ENCODE measurements at regions of chr13 and their contacts with region 1.

Region 1: DNA sequence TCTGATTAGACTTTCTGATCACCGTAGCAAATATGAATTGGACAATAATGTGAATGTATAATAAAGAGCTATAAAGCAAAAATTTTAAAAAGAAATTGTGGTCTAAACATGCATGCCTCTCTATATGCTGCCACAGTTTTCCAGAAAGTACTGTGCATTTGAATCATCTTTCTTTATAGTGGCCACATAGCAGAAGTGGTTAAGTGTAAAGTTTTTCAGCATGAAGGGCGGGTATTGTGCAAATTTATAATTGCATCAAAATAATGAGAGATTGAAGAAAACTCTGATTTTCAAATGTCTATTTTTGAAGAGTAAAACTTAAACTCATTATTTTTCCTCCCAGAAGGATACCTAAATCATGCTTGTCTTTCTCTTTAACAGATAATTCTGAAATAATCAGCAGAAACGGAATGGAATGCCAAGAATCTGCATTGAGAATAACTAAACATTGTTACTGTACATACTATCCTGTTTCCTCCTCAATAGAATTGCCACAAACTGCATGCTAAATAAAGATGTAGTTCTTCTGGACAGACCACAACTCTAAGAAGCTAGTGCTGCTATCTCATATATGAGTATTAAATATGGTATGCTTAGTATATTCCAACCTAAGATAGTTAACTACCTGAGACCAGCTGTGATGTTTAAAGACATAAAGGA is 42.9 kb upstream of the RAP2A start:
- DNase-seq: no peak
- ATAC-seq: no peak
- H3K4me3 ChIP-seq: no peak overlapping the region
- H3K27ac ChIP-seq: no peak overlapping the region
- H3K4me1 ChIP-seq: peaks cover 0 to 6% of the 10 kb centered on the region in 2 experiments; a peak in 1 of 4 replicates
- H3K27me3 ChIP-seq: no peaks in the 10 kb centered on the region
- CTCF ChIP-seq: no peak
- POLR2A ChIP-seq: no peak
- RAD21 ChIP-seq: no peak

Region 2: DNA sequence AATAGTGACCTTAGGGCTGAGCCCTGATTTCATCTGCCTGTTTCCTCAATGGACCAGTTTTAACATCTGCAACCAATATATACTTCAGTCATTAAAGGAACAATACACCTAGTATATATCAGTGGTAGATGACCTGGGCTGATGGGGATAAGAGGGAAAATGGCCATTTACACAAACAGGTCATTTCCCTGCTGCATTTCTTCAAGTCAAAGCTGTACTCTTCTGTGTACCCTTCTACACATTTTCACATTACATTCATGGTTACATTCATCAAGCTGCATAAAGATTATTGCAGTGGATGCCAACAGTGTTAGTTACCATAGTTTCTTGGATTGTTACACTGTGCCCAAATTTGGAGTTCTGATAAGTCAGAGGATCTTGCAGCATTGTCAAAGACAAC is 38.3 kb before region 1 on chr13:
- CTCF ChIA-PET with region 1: no interaction called
- POLR2A ChIA-PET with region 1: no interaction called
- RAD21 ChIA-PET with region 1: no interaction called
- intact Hi-C with region 1: loop called (anchors 1 kb)
- DNase-seq: no peak
- ATAC-seq: no peak
- H3K4me3 ChIP-seq: no peak overlapping the region
- H3K27ac ChIP-seq: no peak overlapping the region
- H3K4me1 ChIP-seq: no peaks in the 10 kb centered on the region
- H3K27me3 ChIP-seq: no peaks in the 10 kb centered on the region
- CTCF ChIP-seq: no peak
- POLR2A ChIP-seq: no peak
- RAD21 ChIP-seq: no peak

Measured in HCT116 (cell line).